ENCODE measurements at regions of chr10 and their contacts with region 1.

Region 1: DNA sequence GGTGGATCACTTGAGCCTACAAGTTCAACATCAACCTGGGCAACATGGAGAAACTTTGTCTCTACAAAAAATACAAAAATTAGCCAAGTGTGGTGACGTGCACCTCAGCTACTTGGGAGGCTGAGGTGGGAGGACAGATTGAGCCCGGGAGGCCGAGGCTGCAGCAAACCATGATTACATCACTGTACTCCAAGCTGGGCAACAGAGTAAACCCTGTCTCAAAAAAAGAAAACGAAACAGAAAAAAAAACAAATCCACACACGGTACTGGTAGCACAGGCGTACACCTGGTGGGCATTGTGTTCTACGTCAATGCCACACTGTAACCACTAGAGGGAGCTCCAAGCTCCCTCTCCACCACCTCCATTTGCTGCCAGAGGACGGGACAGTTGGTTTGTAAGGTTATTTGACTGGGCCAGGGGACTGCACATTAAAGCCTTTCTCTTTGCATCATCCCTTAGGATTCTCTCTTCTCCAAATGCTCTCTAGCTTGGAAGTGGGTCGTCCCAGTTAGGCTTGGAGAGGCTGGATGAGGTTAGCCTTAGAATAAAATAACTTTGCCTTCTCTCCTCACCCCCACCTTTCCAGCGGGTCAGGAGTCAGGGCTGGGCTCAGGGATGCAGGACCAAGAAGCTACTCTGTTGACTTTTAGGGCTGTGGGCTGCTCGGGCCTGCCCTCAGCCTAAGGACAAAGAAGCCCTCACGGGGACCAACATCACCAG is 130.8 kb downstream of the SORBS1 start:
- DNase-seq: no peak
- H3K4me3 ChIP-seq: no peak overlapping the region
- CTCF ChIP-seq: peak; percentile 90

Region 2: GRCh38 chr10:95297402-95297801 is 133.0 kb before region 1 on chr10:
- CTCF ChIA-PET with region 1: no interaction called
- POLR2A ChIA-PET with region 1: no interaction called
- DNase-seq: no peak
- H3K4me3 ChIP-seq: no peak overlapping the region
- CTCF ChIP-seq: no peak

Region 3: GRCh38 chr10:95374597-95375209 is 55.7 kb before region 1 on chr10:
- CTCF ChIA-PET with region 1: interaction called, 11 read pairs
- POLR2A ChIA-PET with region 1: no interaction called
- DNase-seq: no peak
- H3K4me3 ChIP-seq: no peak overlapping the region
- CTCF ChIP-seq: peak; percentile 88

Region 4: DNA sequence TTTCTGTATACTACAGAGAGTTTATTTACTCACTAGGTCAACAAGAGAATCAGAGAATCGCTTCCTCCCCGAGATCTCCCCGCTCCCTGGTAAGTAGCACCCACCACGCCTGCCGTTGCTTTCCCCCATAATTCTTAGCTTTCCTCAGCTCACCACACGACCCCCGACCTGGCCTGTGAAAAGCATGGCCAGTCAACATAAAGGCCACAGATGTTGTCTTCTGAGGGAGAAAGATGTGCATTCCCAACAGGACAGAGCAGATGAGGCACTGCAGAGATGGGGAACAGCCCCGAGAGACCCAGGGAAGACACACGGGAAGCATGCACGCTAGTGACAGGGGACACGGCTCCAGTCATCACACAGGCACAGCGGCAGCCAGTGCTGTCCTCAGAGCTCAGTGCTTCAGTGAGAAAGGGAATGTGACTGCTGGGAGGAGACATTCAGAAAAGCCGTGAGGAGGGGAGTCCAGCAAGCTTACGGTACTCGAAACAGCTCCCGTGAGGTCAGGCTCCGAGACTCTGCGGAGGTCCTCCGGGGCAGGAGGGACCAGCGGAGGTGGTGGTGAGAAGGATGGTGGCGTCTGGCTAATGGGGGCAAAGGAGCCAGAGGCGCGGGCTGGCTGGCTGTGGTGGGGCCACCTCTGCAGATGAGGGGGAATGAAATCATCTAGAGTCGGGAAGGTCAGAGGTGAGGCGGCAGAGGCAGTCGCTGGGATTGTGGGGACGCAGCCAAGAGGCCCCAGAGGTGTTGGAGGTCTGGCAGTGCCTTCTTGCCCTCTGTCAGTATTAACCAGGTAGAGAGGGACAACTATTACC is 16.2 kb before region 1 on chr10:
- CTCF ChIA-PET with region 1: interaction called, 29 read pairs
- POLR2A ChIA-PET with region 1: no interaction called
- DNase-seq: no peak
- H3K4me3 ChIP-seq: no peak overlapping the region
- CTCF ChIP-seq: no peak

Region 5: GRCh38 chr10:95445837-95446486 is 15.6 kb after region 1 on chr10:
- CTCF ChIA-PET with region 1: interaction called, 166 read pairs
- POLR2A ChIA-PET with region 1: no interaction called
- DNase-seq: peak; percentile 19
- H3K4me3 ChIP-seq: no peak overlapping the region
- CTCF ChIP-seq: peak; percentile 74

Region 6: GRCh38 chr10:95456516-95456915 is 26.1 kb after region 1 on chr10:
- CTCF ChIA-PET with region 1: interaction called, 12 read pairs
- POLR2A ChIA-PET with region 1: no interaction called
- DNase-seq: no peak
- H3K4me3 ChIP-seq: no peak overlapping the region
- CTCF ChIP-seq: no peak

Region 7: DNA sequence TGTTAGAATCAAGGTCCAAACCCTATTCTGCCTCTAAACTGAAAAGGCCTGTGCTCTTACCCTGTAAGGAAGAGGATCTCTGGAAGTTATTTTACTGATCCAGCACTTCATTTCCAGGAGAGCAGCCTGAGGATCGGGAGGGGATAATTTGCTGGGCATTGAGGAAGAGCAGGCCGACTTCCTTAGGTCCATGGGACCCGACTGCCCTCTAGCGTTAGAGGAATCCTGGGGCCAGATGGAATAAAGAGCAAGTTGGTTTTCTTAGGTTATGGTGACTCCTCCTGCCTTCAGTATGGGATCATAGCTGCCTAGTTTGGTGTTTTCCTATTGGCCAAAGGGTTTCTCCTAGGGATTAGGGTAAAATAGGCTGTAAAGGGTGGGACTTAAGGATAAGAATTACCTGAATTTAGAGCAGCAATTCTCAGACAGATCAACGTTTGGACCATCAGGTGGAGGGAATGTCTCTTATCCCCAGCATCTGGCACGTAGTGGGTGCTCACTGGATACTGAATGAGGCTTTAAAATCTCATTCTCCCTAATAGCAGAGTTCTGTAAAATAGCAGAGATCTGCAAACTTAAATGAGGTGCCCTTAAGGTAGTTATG is 170.8 kb after region 1 on chr10:
- CTCF ChIA-PET with region 1: interaction called, 299 read pairs
- POLR2A ChIA-PET with region 1: no interaction called
- DNase-seq: peak; percentile 65
- H3K4me3 ChIP-seq: no peak overlapping the region
- CTCF ChIP-seq: peak; percentile 90